Heart left ventricle (tissue), 16 donors: ENCODE measurements at regions of chr15 and their contacts with region 1.

Region 1: DNA sequence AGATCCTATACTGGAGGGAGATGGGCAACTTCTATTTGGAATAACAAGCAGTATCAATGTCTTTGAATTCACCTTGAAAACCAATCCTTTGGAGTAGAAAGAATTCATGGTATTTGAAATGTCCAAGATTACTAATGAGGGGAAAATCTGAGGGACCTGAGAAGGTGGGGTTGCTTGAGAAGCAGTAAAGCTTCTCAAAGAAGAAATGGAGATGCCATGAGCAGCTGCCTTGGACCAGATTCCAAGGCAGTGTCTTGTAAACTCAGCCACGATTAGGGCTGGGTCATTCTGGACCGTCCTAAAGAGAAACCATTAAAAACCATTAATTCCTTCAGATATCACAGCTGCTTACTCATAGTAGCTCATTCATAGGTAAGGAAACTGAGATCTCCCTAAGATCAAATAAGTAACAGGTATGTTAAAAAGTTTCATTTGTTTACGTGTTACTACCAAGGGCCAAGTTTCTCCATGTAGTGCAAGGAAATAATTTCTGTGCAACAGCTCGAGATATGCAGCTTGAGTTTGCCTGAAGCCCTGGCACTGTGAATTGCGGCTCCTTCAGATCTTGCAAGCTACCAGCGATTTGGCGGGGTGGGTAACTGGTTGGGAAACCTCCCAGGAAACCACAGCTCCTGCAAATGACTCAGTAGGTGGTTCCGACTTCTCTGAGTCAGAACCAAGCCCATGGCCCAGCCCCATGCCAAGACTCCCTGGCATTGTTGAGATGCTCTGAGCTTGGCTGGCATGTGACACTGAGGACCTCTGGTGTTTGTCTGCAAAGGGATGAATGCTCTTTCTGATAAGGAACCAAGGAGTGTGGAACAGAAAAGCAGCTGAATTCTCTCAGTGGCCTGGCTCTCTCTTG is 296.8 kb downstream of the RORA start:
- DNase-seq: no peak
- ATAC-seq: peak in 1 of 4 donors; percentile 33
- H3K4me3 ChIP-seq: no peak overlapping the region
- H3K27ac ChIP-seq: no peak overlapping the region
- H3K4me1 ChIP-seq: peaks cover 0 to 31% (median 6%) of the 10 kb centered on the region in 12 donors
- H3K27me3 ChIP-seq: no peaks in the 10 kb centered on the region
- CTCF ChIP-seq: no peak
- POLR2A ChIP-seq: no peak

Region 2: DNA sequence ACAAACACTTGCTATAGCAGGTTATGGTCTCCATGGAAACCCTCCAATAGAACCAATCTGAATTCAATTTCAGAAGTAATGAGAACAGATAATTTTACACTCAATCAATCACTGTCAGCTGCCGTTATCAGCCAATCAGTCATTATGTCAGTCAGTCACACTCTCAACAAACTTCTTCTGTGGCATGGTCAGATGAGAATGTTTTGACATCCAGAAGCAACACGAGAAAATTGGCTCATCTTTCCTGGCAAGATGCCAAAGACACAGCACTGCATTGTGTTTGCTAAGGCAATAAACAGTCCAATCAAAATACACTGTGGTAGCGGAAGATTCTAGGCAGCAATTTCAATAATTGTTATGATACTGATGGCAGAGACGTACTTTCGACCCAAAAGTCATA is 106.1 kb after region 1 on chr15:
- intact Hi-C with region 1: loop called in 2 of 10 experiments (anchors 10 kb)
- DNase-seq: no peak
- ATAC-seq: peak in 1 of 4 donors; percentile 32
- H3K4me3 ChIP-seq: no peak overlapping the region
- H3K27ac ChIP-seq: peak overlapping the region in 2 of 12 donors; percentile 7 to 9
- H3K4me1 ChIP-seq: peaks cover 4 to 57% (median 22%) of the 10 kb centered on the region in 12 donors
- H3K27me3 ChIP-seq: no peaks in the 10 kb centered on the region
- CTCF ChIP-seq: no peak
- POLR2A ChIP-seq: no peak

Region 3: GRCh38 chr15:61051569-61052031 is 119.3 kb after region 1 on chr15:
- intact Hi-C with region 1: loop called in 2 of 10 experiments (anchors 10 kb)
- DNase-seq: peak in 4 of 5 donors; percentile 37 to 44 (median 43)
- ATAC-seq: peak; percentile 79 to 92 (median 91)
- H3K4me3 ChIP-seq: no peak overlapping the region
- H3K27ac ChIP-seq: no peak overlapping the region
- H3K4me1 ChIP-seq: peaks cover 0 to 12% (median 4%) of the 10 kb centered on the region in 12 donors
- H3K27me3 ChIP-seq: no peaks in the 10 kb centered on the region
- CTCF ChIP-seq: peak; percentile 31 to 76 (median 64)
- POLR2A ChIP-seq: no peak